RWPE1 (cell line): ENCODE measurements at regions of chr6 and their contacts with region 1.

Region 1: GRCh38 chr6:83215131-83216047 is 22.2 kb downstream of the RWDD2A start:
- DNase-seq: peak; percentile 50
- H3K27ac ChIP-seq: no peak overlapping the region
- CTCF ChIP-seq: peak; percentile 92

Region 2: DNA sequence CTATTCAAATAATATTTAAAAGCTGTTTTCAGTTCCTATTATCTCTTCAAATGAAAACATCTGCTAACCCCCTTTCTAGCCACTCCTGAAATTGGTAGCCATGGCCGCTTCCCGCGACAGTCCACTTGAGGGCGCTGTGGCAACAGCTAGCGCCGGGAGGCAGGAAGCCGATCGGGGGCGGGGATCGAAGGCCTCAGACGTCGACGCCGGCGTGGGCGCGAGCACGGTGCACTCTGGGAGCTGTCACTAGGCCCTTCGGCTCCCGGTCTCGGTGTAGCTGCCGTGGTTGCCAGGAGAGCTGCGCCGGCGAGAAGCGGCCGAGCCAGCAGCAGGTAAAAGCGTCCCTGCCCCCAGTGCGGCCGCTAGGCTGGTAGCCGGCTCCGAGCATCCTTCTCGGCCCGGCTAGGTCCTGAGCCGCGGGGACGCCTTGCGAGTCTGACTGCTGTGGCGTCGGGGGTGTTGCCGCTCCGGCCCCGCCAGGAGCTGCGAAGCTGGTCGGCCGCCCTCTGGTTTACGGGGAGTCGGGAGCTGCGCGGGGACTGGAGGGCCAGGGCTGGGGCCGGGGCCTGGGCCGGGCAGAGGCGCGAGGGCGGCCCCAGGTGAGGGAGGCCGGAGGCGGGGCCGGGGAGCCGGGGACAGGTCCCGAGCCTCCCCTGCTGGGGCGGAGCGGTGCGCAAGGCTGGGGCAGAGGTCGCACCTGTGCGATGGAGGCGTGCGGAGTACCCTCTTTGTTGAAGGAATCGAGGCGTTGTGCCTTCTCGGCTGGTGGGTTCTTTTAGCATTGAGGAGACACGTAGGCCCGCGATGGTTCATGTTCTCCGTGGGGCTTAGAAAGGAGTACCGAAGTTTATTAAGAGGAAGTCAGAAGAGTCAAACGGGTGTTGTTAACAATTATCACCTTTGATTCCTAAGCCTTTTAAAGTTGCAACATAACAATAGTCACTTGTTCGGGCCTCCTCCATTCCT is 147.7 kb before region 1 on chr6 and contains the start of gene DOP1A:
- CTCF ChIA-PET with region 1: interaction called, 32 read pairs
- POLR2A ChIA-PET with region 1: no interaction called
- DNase-seq: peak; percentile 85
- H3K27ac ChIP-seq: peak within 1 kb of the TSS; percentile 88
- CTCF ChIP-seq: peak; percentile 93

Region 3: GRCh38 chr6:83138118-83138722 is 77.2 kb before region 1 on chr6:
- CTCF ChIA-PET with region 1: no interaction called
- POLR2A ChIA-PET with region 1: no interaction called
- DNase-seq: no peak
- H3K27ac ChIP-seq: no peak overlapping the region
- CTCF ChIP-seq: no peak

Region 4: DNA sequence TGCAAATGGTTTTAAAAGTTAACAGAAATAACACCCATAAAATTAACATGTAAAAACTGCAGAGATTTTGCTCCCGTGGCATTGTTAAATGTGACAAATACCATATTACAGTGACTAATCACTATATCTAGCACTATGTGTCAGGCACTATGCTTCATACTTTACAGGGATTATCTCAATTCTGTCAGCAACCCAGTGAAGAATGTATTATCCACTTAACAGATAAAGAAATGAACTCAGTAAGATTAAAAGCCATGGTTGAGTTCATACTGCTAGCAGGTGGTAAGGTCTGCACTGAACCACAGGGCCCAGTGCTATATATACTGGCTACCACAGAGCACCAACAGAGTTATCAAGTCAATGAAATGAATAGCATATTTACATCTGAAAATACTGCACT is 43.1 kb after region 1 on chr6:
- CTCF ChIA-PET with region 1: no interaction called
- POLR2A ChIA-PET with region 1: no interaction called
- DNase-seq: no peak
- H3K27ac ChIP-seq: no peak overlapping the region
- CTCF ChIP-seq: no peak

Region 5: GRCh38 chr6:83354747-83355146 is 139.4 kb after region 1 on chr6:
- CTCF ChIA-PET with region 1: no interaction called
- POLR2A ChIA-PET with region 1: no interaction called
- DNase-seq: no peak
- H3K27ac ChIP-seq: no peak overlapping the region
- CTCF ChIP-seq: no peak